Heart right ventricle (tissue), 16 donors: ENCODE measurements at regions of chr15 and their contacts with region 1.

Region 1: DNA sequence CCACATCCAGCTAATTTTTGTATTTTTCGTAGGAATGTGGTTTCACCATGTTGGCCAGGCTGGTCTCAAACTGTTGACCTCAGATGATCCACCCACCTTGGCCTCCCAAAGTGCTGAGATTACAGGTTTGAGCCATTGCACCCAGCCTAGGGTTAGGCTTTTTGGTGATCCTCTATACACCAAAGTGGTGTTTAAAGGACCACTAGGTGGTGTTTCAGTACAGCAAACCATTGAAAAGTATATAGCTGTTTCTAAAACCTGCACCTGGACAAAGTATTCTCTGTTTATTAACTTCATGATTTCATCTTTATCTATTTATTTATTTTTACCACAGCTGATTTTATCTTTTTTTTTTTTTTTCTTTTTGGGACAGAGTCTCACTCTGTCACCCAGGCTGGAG is 68.4 kb downstream of the MINDY2 start:
- DNase-seq: no peak
- ATAC-seq: no peak
- H3K4me3 ChIP-seq: no peak overlapping the region
- H3K27ac ChIP-seq: no peak overlapping the region
- H3K4me1 ChIP-seq: no peaks in the 10 kb centered on the region
- H3K27me3 ChIP-seq: no peaks in the 10 kb centered on the region
- CTCF ChIP-seq: peak in 4 of 9 donors; percentile 13 to 29 (median 16)

Region 2: DNA sequence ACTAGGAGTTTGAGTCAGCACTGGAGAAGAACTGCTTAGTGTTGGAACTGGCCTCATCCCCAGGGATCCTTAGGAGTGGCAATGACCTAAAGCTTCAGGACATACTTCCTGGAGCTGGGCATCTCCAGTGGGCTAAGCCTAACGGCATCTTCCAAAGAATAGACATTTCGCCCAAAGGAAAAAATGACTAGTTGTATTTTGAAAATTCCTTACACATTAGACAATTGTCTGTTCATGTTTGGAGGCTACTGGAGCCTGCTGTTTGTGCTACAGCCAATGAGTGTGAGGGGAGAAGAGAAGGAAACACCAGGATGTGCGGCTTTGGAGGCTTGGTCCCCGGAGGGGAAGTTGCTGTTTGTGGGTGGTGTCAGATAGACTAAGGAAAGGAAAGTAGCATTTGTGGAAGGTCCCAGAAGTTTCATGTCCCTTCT is 1055.4 kb before region 1 on chr15:
- intact Hi-C with region 1: no loop called
- DNase-seq: peak; percentile 25 to 62
- ATAC-seq: peak; percentile 73 to 95 (median 92)
- H3K4me3 ChIP-seq: peak overlapping the region in 1 of 10 donors; percentile 3
- H3K27ac ChIP-seq: peak overlapping the region in 9 of 10 donors; percentile 28 to 79 (median 68)
- H3K4me1 ChIP-seq: peaks cover 5 to 29% (median 19%) of the 10 kb centered on the region in 9 donors
- H3K27me3 ChIP-seq: no peaks in the 10 kb centered on the region
- CTCF ChIP-seq: no peak

Region 3: GRCh38 chr15:58864602-58865424 is 25.3 kb after region 1 on chr15:
- intact Hi-C with region 1: loop called in 1 of 10 experiments (anchors 1 kb)
- DNase-seq: peak; percentile 25 to 60
- ATAC-seq: peak; percentile 63 to 83 (median 80)
- H3K4me3 ChIP-seq: peak overlapping the region in 9 of 10 donors; percentile 23 to 61 (median 54)
- H3K27ac ChIP-seq: peak overlapping the region in 9 of 10 donors; percentile 9 to 65 (median 35)
- H3K4me1 ChIP-seq: peaks cover 0 to 16% (median 9%) of the 10 kb centered on the region in 9 donors
- H3K27me3 ChIP-seq: no peaks in the 10 kb centered on the region
- CTCF ChIP-seq: no peak